ENCODE measurements at regions of chr1 and their contacts with region 1.

Region 1: GRCh38 chr1:46179138-46180081 is 3.1 kb upstream of the P3R3URF start:
- DNase-seq: peak; percentile 40
- H3K4me3 Mint-ChIP-seq: no peak overlapping the region
- H3K27ac Mint-ChIP-seq: no peak overlapping the region
- H3K4me1 Mint-ChIP-seq: peaks cover 6% of the 10 kb centered on the region
- H3K27me3 Mint-ChIP-seq: peaks cover 9% of the 10 kb centered on the region

Region 2: DNA sequence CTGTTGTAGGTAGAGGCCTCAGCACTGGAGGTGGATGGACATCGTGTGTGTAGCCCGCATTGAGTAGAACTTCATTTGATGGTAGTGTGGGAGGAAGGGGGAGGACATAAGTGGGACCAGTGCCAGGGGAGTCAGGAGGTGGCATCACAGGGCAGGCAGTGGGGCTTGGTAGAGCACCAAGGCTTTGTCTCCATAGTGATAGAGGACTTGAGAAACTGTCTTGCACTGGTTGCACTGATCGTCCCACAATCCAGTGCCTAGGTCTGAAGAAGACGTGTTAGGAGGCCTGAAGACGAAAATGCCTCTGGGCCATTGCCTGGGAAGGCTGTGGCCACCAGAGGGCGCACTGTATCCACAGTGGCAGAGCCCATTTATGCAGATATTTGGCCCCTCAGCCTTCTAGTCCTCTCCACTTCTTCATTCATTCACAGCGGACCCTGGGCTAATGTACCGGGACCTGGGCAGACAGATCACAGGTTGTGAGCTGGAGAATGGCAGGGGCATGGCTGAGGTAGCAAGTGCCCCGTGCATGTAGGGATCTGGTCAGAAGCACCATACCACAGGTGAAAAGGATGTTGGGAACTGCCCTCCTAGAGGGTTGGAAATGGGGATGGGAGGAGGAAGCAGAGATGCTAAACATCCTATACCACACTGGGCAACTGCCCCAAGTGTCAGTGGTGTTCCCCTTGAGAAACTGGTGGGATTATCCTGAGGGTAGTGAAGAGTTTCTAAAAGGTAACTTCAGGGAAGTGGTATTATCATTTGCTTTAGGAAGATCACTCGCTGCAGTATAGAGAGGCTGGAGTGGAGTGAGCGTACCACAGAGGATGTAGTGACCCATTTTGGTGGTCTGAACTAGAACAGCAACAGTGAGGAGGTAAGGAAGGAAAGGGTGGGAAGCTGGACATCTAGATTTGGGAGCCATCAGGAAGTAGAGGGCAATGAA is 142.2 kb before region 1 on chr1:
- intact Hi-C with region 1: loop called (anchors 1 kb)
- DNase-seq: peak; percentile 62
- H3K4me3 Mint-ChIP-seq: no peak overlapping the region
- H3K27ac Mint-ChIP-seq: no peak overlapping the region
- H3K4me1 Mint-ChIP-seq: no peaks in the 10 kb centered on the region
- H3K27me3 Mint-ChIP-seq: no peaks in the 10 kb centered on the region

Region 3: DNA sequence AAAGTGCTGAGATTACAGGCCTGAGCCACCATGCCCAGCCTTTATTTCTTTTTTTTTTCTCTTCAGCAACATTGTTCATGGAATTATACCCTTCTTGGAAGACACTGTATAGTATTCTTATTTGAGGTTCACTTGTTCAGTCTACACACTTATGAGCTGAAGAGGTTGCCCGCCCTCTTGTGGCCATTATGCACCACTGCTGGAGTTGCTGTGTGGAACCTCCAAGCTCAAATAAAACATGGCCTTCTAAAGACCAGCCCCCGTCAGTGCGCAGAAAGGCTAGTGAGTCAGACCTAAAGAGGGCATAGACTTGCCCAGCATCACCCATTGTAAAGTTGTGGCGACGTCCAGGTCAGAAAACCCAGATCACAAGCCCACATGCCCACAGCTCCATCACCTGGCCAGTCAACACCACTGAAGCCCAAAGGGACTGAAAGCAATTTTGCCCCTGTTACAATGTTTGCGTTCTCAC is 44.1 kb after region 1 on chr1:
- intact Hi-C with region 1: loop called (anchors 1 kb)
- DNase-seq: peak; percentile 34
- H3K4me3 Mint-ChIP-seq: no peak overlapping the region
- H3K27ac Mint-ChIP-seq: no peak overlapping the region
- H3K4me1 Mint-ChIP-seq: no peaks in the 10 kb centered on the region
- H3K27me3 Mint-ChIP-seq: peaks cover 3% of the 10 kb centered on the region

Measured in activated T-helper 1 cell treated with anti-CD3 and anti-CD28 coated beads, Interleukin-12 subunit alpha, Interleukin-12 subunit beta, Interleukin-2, Interleukin-4 antibody, amounts not matched to agents 30 ng/mL and 10 ng/mL and 1 ng/mL, durations not matched to agents 14 hours and 24 hours and 36 hours (primary cell).